ENCODE measurements at regions of chr2 and their contacts with region 1.

Region 1: DNA sequence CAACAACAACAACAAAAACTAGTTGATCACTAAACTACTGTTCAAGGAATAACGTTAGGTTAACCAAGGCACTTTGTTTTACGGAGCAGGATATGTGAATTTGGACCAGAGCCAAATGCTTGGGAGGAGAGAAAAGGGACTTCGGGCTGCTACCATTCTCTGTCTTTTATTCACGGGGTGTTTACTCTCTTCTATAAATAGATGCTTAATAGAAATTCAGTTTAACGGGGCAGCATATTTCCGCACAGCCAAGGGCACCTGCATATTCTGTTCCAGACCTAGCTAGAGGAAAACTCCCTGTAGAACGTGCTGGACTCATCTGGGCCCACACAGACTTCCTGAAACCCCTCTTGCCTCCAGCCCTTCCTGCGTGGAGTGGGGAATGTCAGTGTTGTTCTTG is 35.8 kb upstream of the STK39 start:
- DNase-seq: no peak
- ATAC-seq: no peak
- H3K4me3 Mint-ChIP-seq: no peak overlapping the region
- H3K27ac Mint-ChIP-seq: no peak overlapping the region
- H3K4me1 Mint-ChIP-seq: no peaks in the 10 kb centered on the region
- H3K27me3 Mint-ChIP-seq: no peaks in the 10 kb centered on the region
- CTCF ChIP-seq: no peak

Region 2: DNA sequence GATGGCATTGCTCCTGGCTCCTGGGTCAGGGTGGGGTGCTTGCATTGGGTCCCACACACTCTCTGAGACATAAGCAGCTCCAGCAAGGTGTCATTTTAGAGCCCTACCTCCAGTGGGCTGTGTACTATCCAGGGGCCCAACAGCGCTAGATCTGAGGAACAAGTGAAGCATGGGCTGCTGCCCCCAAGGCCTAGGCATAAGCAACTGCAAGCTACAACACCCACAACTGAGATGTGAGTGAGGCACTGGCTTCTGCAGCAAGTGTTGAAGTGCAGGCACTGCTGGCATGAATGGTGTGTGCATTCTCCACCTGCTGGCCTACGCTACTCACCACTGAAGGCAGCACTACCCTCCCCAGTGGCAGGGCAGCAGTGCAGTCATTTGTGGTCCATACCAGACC is 45.2 kb after region 1 on chr2:
- CTCF ChIA-PET with region 1: no interaction called
- POLR2A ChIA-PET with region 1: no interaction called
- DNase-seq: peak; percentile 24
- ATAC-seq: peak; percentile 94
- H3K4me3 Mint-ChIP-seq: no peak overlapping the region
- H3K27ac Mint-ChIP-seq: no peak overlapping the region
- H3K4me1 Mint-ChIP-seq: peaks cover 9% of the 10 kb centered on the region
- H3K27me3 Mint-ChIP-seq: peaks cover 3% of the 10 kb centered on the region; the same call in 1 of the 2 replicates
- CTCF ChIP-seq: 0 out of 2 replicates have a peak, but pooled peaks have one; percentile 14

Region 3: DNA sequence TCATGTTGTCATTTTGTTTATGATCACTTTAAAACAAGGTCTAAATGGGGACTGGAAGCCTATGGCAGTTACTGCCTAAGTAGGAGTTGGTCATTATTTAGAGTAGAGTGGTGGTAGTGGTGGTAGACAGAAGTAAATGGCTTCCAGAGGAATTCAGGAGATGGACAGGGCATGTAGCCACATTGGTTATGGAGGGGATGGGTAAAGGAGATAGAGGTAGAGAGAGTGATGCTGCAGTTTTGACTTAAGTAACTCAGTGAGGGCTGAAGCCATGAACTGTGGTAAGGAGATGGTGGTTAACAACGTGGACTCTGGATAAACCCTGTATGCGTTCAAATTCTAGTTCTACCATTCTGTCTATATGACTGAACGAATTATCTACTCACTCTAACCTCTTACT is 457.6 kb after region 1 on chr2:
- CTCF ChIA-PET with region 1: interaction called, 3 read pairs
- POLR2A ChIA-PET with region 1: interaction called, 10 read pairs
- DNase-seq: no peak
- ATAC-seq: no peak
- H3K4me3 Mint-ChIP-seq: no peak overlapping the region
- H3K27ac Mint-ChIP-seq: no peak overlapping the region
- H3K4me1 Mint-ChIP-seq: peaks cover 7% of the 10 kb centered on the region
- H3K27me3 Mint-ChIP-seq: no peaks in the 10 kb centered on the region
- CTCF ChIP-seq: no peak

Measured in WTC11 (cell line).